H1 (cell line): ENCODE measurements at regions of chr5 and their contacts with region 1.

Region 1: DNA sequence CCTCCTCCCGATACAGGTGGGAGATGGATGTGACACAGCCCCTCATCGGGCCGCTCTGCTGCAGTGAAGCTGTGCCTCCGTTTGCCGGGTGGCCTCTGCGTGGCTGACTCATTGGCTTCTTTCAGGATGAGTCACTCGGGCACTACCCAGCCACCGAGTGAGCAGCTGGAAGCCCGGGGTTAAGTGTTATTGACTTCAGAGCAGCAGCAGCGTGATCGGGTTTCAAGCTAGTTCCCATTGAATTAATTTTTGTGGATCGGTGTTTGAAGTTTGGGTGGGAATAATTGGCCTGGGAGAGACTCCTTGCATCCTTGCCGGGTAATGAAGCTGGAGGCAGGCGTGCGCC is 266.4 kb upstream of the IRX4 start:
- DNase-seq: peak in 1 of 2 experiments; percentile 38
- H3K4me3 ChIP-seq: no peak overlapping the region
- H3K27ac ChIP-seq: no peak overlapping the region
- H3K4me1 ChIP-seq: peaks cover 2 to 15% (median 11%) of the 10 kb centered on the region in 4 experiments; a peak in 5 of 7 replicates
- H3K27me3 ChIP-seq: no peaks in the 10 kb centered on the region
- CTCF ChIP-seq: no peak
- EP300 ChIP-seq: no peak
- POLR2A ChIP-seq: no peak
- RAD21 ChIP-seq: no peak; a peak in 1 of 4 replicates

Region 2: DNA sequence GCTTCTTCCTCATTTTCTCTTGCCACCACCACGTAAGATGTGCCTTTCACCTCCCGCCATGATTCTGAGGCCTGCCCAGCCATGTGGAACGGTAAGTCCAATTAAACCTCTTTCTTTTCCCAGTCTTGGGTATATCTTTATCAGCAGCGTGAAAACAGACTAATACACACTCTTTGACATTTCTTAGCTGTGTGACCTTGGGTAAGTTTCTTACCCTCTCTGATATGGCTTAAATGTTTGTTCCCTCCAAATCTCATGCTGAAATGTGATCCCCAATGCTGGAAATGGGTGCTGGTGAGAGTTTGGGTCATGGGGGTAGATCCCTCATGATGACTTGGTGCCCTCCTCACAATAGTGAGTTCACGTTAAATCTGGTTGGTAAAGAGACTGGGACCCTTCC is 77.6 kb before region 1 on chr5:
- CTCF ChIA-PET with region 1: interaction called, 32 read pairs
- POLR2A ChIA-PET with region 1: no interaction called
- DNase-seq: no peak
- H3K4me3 ChIP-seq: no peak overlapping the region
- H3K27ac ChIP-seq: no peak overlapping the region
- H3K4me1 ChIP-seq: peaks cover 0 to 5% (median 4%) of the 10 kb centered on the region in 4 experiments; a peak in 3 of 7 replicates
- H3K27me3 ChIP-seq: no peaks in the 10 kb centered on the region
- CTCF ChIP-seq: no peak
- EP300 ChIP-seq: no peak
- POLR2A ChIP-seq: no peak
- RAD21 ChIP-seq: no peak